Activated T-helper 2 cell treated with anti-CD3 and anti-CD28 coated beads, Interferon-gamma antibody, Interleukin-2, Interleukin-4, amounts not matched to agents 10 μg/mL and 5 μg/mL and 100 μg/mL, durations not matched to agents 14 hours and 24 hours and 36 hours (primary cell): ENCODE measurements at regions of chr3 and their contacts with region 1.

Region 1: GRCh38 chr3:11271986-11272904 is at the start of gene ATG7:
- DNase-seq: peak; percentile 95
- H3K4me3 Mint-ChIP-seq: peak within 1 kb of the TSS; percentile 90
- H3K27ac Mint-ChIP-seq: peak within 1 kb of the TSS; percentile 93
- H3K4me1 Mint-ChIP-seq: peaks cover 43% of the 10 kb centered on the region
- H3K27me3 Mint-ChIP-seq: peaks cover 2% of the 10 kb centered on the region
- total RNA-seq, gene ATG7: 44.1 and 45.2 TPM in 2 replicates

Region 2: GRCh38 chr3:11128682-11129632 is 143.3 kb before region 1 on chr3:
- intact Hi-C with region 1: no loop called
- DNase-seq: no peak
- H3K4me3 Mint-ChIP-seq: no peak overlapping the region
- H3K27ac Mint-ChIP-seq: peak overlapping the region; percentile 8
- H3K4me1 Mint-ChIP-seq: peaks cover 7% of the 10 kb centered on the region
- H3K27me3 Mint-ChIP-seq: peaks cover 8% of the 10 kb centered on the region

Region 3: DNA sequence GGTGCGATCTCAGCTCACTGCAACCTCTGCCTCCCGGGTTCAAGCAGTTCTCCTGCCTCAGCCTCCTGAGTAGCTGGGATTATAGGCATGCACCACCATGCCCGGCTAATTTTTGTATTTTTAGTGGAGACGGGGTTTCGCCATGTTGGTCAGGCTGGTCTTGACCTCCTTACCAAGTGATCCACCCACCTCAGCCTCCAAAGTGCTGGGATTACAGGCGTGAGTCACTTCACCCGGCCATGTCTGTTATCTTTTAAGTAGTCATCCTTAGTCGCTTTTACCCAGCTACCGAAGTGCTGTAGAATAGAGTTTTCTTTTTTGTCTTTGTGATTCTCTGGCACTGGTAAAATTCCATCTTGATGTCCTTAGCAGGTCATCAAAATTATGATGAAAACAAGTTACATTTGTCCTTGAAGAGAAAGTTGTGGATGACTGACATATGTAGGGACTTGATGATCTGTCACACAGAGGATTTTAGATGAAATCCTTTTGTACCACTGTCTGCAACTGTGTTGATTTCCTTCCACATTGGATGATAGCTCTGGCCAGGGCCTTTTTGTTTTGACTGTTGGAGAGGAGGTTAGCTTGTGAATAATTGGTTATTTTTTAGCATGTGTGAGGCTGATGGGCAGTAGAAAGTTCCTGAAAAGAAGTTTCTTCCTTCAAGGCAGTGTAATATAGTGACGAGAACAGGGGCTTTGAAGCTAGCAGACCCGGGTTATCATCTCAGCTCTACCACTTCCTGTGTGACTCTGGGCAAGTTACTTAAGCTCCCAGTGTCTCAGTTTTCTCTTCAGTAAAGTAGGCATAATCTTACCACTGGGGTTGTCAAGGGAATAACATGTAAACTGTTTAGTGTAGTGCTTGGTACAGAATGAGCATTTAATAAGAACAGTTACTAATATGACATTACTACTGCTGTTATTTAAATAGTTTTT is 18.8 kb after region 1 on chr3:
- intact Hi-C with region 1: loop called (anchors 1 kb)
- DNase-seq: peak; percentile 20
- H3K4me3 Mint-ChIP-seq: peak overlapping the region; percentile 37
- H3K27ac Mint-ChIP-seq: peak overlapping the region; percentile 89
- H3K4me1 Mint-ChIP-seq: peaks cover 52% of the 10 kb centered on the region
- H3K27me3 Mint-ChIP-seq: no peaks in the 10 kb centered on the region

Region 4: DNA sequence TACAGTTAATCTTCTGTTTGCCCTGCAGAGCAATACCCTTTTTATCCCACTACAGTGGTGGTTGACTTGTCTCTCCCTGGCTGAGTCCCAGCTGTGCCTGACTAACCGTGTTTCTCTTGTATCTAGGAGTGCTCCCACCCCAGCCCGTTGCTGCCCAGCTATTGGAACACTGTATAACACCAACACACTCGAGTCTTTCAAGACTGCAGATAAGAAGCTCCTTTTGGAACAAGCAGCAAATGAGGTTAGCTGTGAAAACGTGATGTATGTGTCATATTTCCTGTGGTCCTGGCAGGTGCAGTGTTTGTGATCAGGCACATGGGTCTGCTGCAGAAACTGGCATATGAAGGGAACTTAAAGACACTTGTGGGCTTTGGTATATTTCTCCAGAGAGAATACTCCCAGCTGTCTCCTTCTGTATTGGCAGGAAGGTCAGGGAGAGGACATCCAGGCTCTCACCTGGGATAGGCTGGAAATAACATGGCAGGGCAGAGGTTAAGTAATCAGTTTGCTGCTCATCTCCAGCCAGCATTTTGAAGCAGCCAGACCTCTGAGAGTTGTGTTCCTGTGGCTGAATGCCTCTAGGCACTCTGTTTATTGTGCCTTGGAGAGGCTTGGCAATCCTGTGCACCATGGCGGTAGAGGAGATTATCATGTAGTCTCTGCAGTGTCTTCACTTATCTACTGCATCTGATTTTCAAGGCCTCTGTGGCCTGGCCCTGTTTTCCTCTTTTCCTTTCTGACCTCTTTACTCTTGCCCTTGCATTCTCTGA is 34.8 kb after region 1 on chr3:
- intact Hi-C with region 1: loop called (anchors 2 kb)
- DNase-seq: peak; percentile 27
- H3K4me3 Mint-ChIP-seq: no peak overlapping the region
- H3K27ac Mint-ChIP-seq: peak overlapping the region; percentile 53
- H3K4me1 Mint-ChIP-seq: peaks cover 29% of the 10 kb centered on the region
- H3K27me3 Mint-ChIP-seq: no peaks in the 10 kb centered on the region

Region 5: DNA sequence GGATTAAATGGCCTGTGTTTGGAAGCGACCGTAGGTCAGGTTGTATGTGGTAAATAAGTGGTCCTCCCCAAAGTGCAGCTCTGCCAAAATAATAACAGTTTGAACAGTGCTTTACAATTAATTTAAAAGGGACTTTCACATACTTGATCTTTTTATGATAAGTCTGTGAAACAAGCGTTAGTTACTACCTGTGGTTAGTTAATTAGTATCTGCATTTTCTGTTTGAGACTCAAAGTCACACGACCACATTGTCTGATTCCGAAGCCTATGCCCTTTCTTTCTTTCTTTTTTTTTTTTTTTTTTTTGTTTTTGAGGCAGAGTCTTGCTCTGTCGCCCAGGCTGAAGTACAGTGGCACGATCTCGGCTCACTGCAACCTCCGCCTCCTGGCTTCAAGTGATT is 45.1 kb after region 1 on chr3:
- intact Hi-C with region 1: no loop called
- DNase-seq: no peak
- H3K4me3 Mint-ChIP-seq: no peak overlapping the region
- H3K27ac Mint-ChIP-seq: no peak overlapping the region
- H3K4me1 Mint-ChIP-seq: peaks cover 2% of the 10 kb centered on the region
- H3K27me3 Mint-ChIP-seq: no peaks in the 10 kb centered on the region

Region 6: DNA sequence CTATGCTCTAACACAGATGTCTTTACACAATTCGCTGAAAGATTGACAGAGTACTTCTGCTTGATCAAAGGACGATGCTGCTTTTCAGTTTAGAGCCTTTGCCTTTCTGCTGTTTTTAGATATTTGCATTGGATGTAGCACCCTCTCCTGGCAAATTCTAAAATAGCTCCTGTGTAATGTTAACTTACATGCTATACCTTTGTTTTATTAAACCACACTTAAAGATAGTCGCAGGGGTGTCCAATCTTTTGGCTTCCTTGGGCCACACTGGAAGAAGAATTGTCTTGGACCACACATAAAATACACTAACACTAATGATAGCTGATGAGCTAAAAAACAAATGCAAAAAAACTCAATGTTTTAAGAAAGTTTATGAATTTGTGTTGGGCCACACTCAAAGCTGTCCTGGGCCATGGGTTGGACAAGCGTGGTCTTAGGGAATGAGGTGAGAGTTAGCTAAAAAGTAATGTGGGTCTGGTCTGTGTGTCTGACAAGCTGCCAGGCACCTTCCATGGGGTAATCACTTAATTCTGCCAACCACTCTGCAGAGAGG is 62.9 kb after region 1 on chr3:
- intact Hi-C with region 1: loop called (anchors 5 kb)
- DNase-seq: no peak
- H3K4me3 Mint-ChIP-seq: no peak overlapping the region
- H3K27ac Mint-ChIP-seq: no peak overlapping the region
- H3K4me1 Mint-ChIP-seq: peaks cover 10% of the 10 kb centered on the region
- H3K27me3 Mint-ChIP-seq: no peaks in the 10 kb centered on the region